Sciatic nerve (tissue), 2 donors: ENCODE measurements at regions of chr12 and their contacts with region 1.

Region 1: DNA sequence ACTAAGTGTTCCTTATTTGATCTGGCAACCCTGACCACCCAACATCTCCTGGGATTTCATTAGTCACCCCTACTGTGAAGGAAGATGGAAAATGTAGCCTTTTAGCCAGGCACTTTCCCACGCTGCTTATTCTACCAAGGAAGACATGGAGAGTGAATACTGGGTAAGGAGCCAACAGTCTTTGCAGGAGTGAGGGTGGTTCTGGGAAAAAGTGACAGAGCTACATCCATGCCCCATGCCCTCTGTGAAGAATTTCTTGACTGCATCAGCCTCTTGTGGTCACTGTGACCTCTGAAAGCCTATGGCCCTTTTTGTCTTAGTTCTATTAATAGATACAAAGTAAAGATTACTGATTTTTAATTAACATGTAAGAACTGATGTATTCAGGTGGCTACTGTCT is 196.0 kb upstream of the EEA1 start:
- DNase-seq: no peak
- ATAC-seq: no peak

Region 2: GRCh38 chr12:93146263-93146939 is 21.3 kb after region 1 on chr12:
- intact Hi-C with region 1: loop called (anchors 1 kb)
- DNase-seq: peak; percentile 71
- ATAC-seq: peak; percentile 87